PC-9 (cell line): ENCODE measurements at regions of chr2 and their contacts with region 1.

Region 1: GRCh38 chr2:85728883-85729824 is 24.6 kb upstream of the ATOH8 start:
- DNase-seq: peak; percentile 44 to 78
- H3K4me3 ChIP-seq: no peak overlapping the region
- H3K27ac ChIP-seq: no peak overlapping the region
- H3K4me1 ChIP-seq: no peaks in the 10 kb centered on the region; the same call in 1 of the 2 replicates
- H3K27me3 ChIP-seq: no peaks in the 10 kb centered on the region
- CTCF ChIP-seq: peak; percentile 90

Region 2: DNA sequence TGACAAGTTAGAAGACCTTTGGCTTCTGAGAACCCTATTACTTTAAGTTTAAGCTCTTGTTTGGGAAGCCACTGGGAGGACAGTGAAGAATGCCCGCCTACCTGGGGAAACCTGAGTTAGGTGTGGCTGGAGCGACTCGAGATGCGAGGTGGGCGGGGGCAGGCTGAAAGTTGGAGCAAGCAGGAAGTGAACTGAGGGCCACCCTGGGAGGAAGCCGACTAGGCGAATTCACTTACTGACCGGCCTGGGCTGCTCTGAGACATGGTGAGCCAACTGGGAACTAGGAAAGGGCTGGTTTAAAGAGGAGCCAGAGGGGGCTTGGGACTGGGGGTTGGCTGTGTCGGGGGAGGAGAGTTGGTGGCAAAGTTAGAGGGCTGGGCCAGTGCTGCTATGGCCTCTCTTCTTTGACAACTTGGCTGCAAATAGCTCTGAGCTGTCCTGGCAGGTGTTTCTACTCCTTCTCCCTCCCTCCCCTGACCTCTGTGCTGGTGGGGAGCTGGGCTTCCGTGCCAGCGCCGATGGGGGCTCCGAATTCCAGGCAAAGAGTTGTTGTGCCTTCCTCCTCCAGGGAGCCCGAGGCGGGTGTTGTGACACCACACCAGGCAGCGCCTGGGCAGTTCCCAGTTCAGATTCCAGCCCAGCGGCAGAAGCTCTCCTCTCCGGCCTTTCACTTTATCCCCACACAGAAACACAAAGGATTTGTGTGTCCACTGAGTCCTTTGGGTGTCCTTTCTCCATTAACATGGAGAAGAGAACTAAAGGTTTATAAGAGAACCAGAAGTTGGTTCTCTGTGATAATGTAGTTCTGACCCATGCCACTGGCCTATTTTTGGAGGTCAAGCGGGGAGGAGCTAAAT is 151.5 kb before region 1 on chr2 and contains the start of gene VAMP8:
- CTCF ChIA-PET with region 1: interaction called, 14 read pairs
- POLR2A ChIA-PET with region 1: no interaction called
- intact Hi-C with region 1: no loop called
- DNase-seq: peak; percentile 79 to 83
- H3K4me3 ChIP-seq: peak within 1 kb of the TSS; percentile 60
- H3K27ac ChIP-seq: peak within 1 kb of the TSS; percentile 64
- H3K4me1 ChIP-seq: peaks cover 22% of the 10 kb centered on the region
- H3K27me3 ChIP-seq: no peaks in the 10 kb centered on the region
- CTCF ChIP-seq: no peak
- total RNA-seq, gene VAMP8: 91.9 and 124 TPM in 2 replicates

Region 3: DNA sequence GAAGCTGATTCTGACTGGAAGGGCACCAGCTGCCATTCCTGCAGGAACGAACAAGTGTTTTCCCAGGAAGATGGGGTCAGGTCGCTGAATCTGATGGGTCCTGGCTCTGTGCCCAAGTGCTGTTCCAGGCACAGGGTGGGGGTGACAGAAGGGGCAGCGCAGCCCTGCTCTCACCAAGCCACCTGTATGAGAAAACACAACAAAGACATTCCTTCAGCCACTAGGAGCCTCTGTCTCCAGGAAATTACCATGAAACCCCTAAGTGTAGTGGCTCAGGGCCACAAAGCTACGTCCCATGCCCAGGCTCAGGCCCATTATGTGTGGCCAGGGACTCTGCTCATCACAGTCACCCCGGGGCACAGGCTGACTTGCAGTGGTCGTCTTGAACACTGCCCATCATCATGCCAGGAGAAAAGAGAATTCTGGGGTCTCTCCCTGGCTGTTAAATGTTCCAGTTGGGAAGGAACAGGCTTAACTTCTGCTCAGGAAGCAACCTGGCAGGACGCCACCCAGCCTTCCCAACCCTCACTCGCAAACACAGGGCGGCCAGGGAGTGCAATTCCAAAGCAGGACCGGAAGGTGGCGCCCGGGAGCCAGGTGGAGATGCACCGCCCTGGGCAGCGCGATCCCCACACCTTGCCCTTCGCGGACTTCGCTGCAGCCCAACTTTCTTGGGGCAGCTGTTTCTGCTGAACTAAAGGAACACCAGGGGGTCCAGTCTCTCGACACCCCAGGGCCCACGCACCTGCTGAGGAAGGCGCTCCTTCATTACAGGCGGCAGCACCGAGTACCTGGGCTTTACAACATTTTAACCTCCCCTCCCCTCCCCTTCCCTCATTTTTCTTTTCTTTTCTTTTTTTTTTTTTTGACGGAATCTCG is 50.1 kb before region 1 on chr2:
- CTCF ChIA-PET with region 1: no interaction called
- POLR2A ChIA-PET with region 1: no interaction called
- intact Hi-C with region 1: loop called (anchors 5 kb)
- DNase-seq: peak; percentile 60 to 89
- H3K4me3 ChIP-seq: peak overlapping the region; percentile 41; the same call in 1 of the 2 replicates
- H3K27ac ChIP-seq: peak overlapping the region; percentile 99; the same call in 1 of the 2 replicates
- H3K4me1 ChIP-seq: peaks cover 38% of the 10 kb centered on the region
- H3K27me3 ChIP-seq: no peaks in the 10 kb centered on the region
- CTCF ChIP-seq: peak; percentile 97

Region 4: GRCh38 chr2:85772019-85772745 is 43.0 kb after region 1 on chr2:
- CTCF ChIA-PET with region 1: no interaction called
- POLR2A ChIA-PET with region 1: no interaction called
- intact Hi-C with region 1: loop called (anchors 1 kb)
- DNase-seq: peak; percentile 82 to 97
- H3K4me3 ChIP-seq: peak overlapping the region; percentile 41; the same call in 1 of the 2 replicates
- H3K27ac ChIP-seq: no peak overlapping the region
- H3K4me1 ChIP-seq: peaks cover 20% of the 10 kb centered on the region
- H3K27me3 ChIP-seq: peaks cover 6% of the 10 kb centered on the region; the same call in 1 of the 2 replicates
- CTCF ChIP-seq: no peak

Region 5: DNA sequence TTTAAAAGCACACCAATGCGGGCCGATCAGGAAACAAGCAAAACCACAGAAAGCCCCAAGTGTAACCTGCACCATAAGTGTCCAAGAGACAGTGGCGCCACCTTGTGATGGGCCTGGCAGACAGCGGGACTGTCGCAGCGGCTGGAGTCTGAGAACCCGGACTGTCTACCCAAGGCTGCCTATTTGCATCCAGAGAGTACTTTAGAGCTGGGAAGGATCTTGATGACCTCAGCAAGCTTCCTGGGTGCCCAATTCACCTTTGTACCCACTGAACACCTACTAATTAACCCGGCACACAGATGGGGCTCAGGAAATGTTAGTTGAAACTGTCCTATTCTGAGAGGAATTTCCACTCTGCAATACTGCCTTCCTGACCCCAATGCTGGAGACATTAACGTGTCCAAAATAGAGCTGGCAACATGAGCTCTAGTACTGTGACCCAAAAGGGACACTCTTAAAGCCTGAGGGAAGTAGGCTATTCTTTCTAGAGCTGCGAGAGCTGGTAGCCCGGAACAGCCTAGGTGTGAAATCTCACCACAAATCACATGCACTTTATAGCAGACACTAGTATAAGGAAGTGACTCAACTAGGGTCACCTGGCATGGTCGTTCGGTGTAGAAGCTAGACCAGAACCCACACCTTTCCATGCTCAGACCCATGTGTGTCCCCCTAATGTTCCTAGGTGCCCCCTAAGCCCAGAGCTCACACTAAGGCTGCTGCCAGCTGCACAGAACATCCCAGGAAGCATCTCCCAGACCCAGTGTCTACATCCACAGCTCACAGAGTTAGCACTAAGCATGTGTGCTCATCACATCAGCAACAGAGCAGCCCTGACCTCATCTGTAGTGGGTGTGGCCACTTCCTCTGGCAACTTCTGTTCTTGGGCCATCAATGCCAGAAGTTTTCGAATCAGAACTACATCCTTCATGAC is 351.1 kb after region 1 on chr2:
- CTCF ChIA-PET with region 1: no interaction called
- POLR2A ChIA-PET with region 1: no interaction called
- intact Hi-C with region 1: loop called (anchors 2 kb)
- DNase-seq: peak in 1 of 2 experiments; percentile 62
- H3K4me3 ChIP-seq: no peak overlapping the region
- H3K27ac ChIP-seq: no peak overlapping the region
- H3K4me1 ChIP-seq: no peaks in the 10 kb centered on the region
- H3K27me3 ChIP-seq: no peaks in the 10 kb centered on the region
- CTCF ChIP-seq: peak; percentile 76